Left lung (tissue), 14 donors: ENCODE measurements at regions of chr9 and their contacts with region 1.

Region 1: GRCh38 chr9:92133949-92134604 is 18.9 kb upstream of the SPTLC1 start:
- DNase-seq: peak in 3 of 4 donors; percentile 76 to 95 (median 83)
- ATAC-seq: peak; percentile 89
- H3K4me3 ChIP-seq: no peak overlapping the region
- H3K27ac ChIP-seq: no peak overlapping the region
- H3K4me1 ChIP-seq: peaks cover 0 to 7% of the 10 kb centered on the region in 2 donors
- H3K27me3 ChIP-seq: peaks cover 0 to 12% of the 10 kb centered on the region in 2 donors
- CTCF ChIP-seq: peak; percentile 96 to 99

Region 2: GRCh38 chr9:92236465-92236864 is 102.4 kb after region 1 on chr9:
- intact Hi-C with region 1: loop called in 1 of 2 experiments (anchors 5 kb)
- DNase-seq: no peak
- ATAC-seq: no peak
- H3K4me3 ChIP-seq: no peak overlapping the region
- H3K27ac ChIP-seq: no peak overlapping the region
- H3K4me1 ChIP-seq: no peaks in the 10 kb centered on the region
- H3K27me3 ChIP-seq: no peaks in the 10 kb centered on the region
- CTCF ChIP-seq: no peak

Region 3: GRCh38 chr9:92648474-92649372 is 514.6 kb after region 1 on chr9:
- intact Hi-C with region 1: loop called in 1 of 2 experiments (anchors 10 kb)
- DNase-seq: peak in 1 of 4 donors; percentile 44
- ATAC-seq: no peak
- H3K4me3 ChIP-seq: no peak overlapping the region
- H3K27ac ChIP-seq: no peak overlapping the region
- H3K4me1 ChIP-seq: no peaks in the 10 kb centered on the region
- H3K27me3 ChIP-seq: no peaks in the 10 kb centered on the region
- CTCF ChIP-seq: no peak